ENCODE measurements at regions of chr3 and their contacts with region 1.

Region 1: DNA sequence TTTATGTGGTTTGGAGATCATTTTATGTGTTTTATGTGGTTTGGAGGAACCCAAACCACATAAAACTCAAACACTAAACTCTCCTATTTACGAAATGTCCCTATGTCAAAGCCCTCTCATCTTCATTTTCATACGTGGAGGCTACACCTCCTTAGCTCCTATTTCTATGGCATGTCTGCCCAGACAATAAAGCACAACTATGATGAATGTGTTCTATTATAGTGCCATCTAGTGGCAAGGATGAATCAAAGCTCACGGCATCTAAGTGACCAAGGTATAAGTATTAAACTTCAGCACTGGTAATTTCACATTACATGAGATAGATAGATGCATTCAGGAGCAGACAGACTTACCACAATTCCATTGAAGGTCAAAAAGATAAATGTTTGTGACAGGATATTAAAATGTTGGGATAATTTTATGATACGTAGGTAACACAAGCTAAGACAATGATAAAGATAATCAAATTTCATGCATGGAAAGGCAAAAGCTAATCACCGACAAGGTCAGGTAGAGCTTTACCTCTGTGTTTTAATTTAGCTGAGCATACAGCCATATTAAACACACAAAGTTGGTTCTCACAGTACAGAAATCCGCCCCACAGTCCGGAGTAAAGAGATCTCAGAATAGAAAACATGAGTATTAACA is 130.6 kb upstream of the FHIT start:
- DNase-seq: peak; percentile 39
- H3K4me3 ChIP-seq: no peak overlapping the region; a peak in 1 of 4 replicates
- H3K27ac ChIP-seq: no peak overlapping the region
- H3K4me1 ChIP-seq: no peaks in the 10 kb centered on the region
- H3K27me3 ChIP-seq: no peaks in the 10 kb centered on the region
- CTCF ChIP-seq: peak; percentile 75
- EP300 ChIP-seq: no peak
- RAD21 ChIP-seq: peak; percentile 80

Region 2: GRCh38 chr3:61061092-61061723 is 320.7 kb before region 1 on chr3:
- CTCF ChIA-PET with region 1: no interaction called
- POLR2A ChIA-PET with region 1: no interaction called
- DNase-seq: no peak
- H3K4me3 ChIP-seq: no peak overlapping the region
- H3K27ac ChIP-seq: no peak overlapping the region
- H3K4me1 ChIP-seq: no peaks in the 10 kb centered on the region
- H3K27me3 ChIP-seq: no peaks in the 10 kb centered on the region
- CTCF ChIP-seq: no peak
- EP300 ChIP-seq: no peak
- RAD21 ChIP-seq: no peak

Region 3: GRCh38 chr3:61371123-61371522 is 10.7 kb before region 1 on chr3:
- CTCF ChIA-PET with region 1: interaction called, 20 read pairs
- POLR2A ChIA-PET with region 1: no interaction called
- DNase-seq: peak; percentile 40
- H3K4me3 ChIP-seq: peak overlapping the region in 1 of 2 experiments; percentile 20; a peak in 1 of 4 replicates
- H3K27ac ChIP-seq: no peak overlapping the region
- H3K4me1 ChIP-seq: no peaks in the 10 kb centered on the region
- H3K27me3 ChIP-seq: no peaks in the 10 kb centered on the region
- CTCF ChIP-seq: peak; percentile 64
- EP300 ChIP-seq: no peak
- RAD21 ChIP-seq: peak; percentile 74

Measured in SK-N-SH (cell line).